ENCODE measurements at regions of chr5 and their contacts with region 1.

Region 1: GRCh38 chr5:112146323-112147226 is 272.5 kb downstream of the EPB41L4A start:
- DNase-seq: peak; percentile 41
- ATAC-seq: peak; percentile 89 to 90

Region 2: GRCh38 chr5:111158105-111158744 is 988.4 kb before region 1 on chr5:
- intact Hi-C with region 1: loop called in 1 of 2 experiments (anchors 5 kb)
- DNase-seq: peak; percentile 64
- ATAC-seq: peak; percentile 63 to 70

Region 3: GRCh38 chr5:111530298-111530740 is 616.3 kb before region 1 on chr5:
- intact Hi-C with region 1: loop called (anchors 5 to 10 kb)
- DNase-seq: peak; percentile 84
- ATAC-seq: peak; percentile 83 to 98

Region 4: GRCh38 chr5:111550279-111551020 is 596.1 kb before region 1 on chr5:
- intact Hi-C with region 1: loop called in 1 of 2 experiments (anchors 2 kb)
- DNase-seq: peak; percentile 83
- ATAC-seq: peak; percentile 85 to 94

Region 5: DNA sequence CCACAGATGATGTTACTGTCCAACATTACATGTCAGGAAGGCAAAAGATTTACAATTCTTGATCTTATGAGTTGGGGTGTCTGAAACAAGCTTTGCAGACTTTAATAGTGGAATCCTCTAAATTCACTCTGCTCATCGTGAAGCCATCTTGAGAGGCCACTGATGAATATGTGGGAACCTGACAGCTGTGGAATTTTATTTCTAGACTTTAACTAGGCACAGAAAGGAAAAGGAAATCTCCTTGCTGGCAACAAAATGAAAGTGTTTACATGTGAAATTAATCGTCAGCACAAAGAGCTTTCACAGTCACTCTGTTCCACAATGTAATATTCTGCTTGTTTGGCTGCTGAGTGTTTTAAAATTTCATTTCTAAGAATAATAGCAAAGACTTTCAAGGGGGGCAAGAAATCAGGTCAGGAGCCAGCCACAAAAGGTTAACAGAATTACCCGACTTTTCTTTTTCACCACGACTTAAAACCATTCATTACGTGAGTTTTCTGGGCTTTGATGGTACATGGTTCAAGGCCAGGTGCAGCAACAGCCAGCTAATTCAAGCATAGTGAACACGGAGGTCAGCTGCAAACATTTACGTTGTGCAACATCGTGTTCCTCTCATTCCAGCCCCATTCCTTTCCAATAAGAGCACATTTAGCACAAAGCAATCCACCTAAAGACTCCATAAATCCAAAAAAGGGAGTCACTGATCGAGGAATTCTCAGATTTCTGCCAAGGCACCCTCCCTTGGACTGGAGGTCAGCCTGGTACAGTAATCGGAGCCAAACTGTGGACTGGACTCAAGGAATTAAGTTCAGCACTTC is 404.2 kb before region 1 on chr5:
- intact Hi-C with region 1: loop called in 1 of 2 experiments (anchors 10 kb)
- DNase-seq: no peak
- ATAC-seq: peak; percentile 33 to 72

Region 6: DNA sequence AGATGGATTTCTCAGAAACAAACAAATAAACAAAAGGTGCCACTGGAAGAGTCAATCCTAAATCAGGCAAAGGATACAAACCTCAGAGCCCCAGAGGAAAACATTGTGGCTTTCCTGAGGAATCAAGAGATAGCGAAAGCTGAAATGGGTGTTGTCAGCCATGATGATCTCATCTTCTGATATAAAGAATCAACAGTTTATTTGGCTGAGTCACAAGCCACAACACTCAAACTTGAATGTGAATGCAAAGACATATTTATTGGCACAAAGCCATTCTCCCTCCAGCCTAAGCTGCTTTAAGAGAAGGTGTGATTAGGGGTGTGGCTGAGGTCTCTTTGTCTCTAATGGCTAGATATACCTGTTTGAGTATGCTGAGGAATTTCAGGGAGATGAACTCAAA is 316.2 kb before region 1 on chr5:
- intact Hi-C with region 1: loop called in 1 of 2 experiments (anchors 10 kb)
- DNase-seq: no peak
- ATAC-seq: no peak

Region 7: DNA sequence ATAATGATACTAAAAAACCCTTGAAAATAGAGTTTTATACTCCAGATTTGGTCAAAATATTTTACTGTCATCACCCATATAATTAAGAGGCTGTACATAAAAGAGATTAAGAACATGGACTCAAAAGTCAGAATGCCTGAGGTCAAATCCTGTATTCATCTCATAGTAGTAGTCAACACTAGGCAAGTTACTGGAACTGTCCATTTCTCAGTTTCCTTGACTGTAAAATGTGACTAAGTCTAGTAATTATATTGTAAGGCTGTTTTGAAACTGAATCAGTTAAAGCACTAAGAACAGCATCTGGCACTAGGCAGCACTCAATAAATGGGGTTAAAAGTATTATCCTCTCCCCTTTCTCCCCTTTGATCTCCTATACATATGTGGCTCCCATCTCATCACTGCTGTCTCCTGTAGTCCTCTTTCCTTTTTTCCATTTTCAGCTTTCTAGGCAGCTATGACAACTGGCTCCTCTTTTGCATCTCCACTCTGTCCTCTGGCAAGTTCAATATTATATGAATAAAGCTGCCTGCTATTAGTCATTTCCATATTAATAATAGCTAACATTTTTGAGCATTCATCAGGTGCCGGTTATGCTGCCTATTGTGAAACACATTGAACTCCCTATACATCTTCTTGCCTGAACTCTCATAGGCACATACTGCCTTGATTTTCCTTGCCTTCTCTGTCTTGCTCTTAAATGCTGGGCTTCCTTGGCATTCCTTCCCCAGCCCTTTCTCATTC is 203.7 kb before region 1 on chr5:
- intact Hi-C with region 1: no loop called
- DNase-seq: no peak
- ATAC-seq: no peak

Measured in left cardiac atrium (tissue), 4 donors.